Activated CD4-positive, alpha-beta T cell treated with anti-CD3 and anti-CD28 coated beads, Interleukin-2, amount 10 ng/mL, durations not matched to agents 24 days and 14 days (primary cell): ENCODE measurements at regions of chr13 and their contacts with region 1.

Region 1: DNA sequence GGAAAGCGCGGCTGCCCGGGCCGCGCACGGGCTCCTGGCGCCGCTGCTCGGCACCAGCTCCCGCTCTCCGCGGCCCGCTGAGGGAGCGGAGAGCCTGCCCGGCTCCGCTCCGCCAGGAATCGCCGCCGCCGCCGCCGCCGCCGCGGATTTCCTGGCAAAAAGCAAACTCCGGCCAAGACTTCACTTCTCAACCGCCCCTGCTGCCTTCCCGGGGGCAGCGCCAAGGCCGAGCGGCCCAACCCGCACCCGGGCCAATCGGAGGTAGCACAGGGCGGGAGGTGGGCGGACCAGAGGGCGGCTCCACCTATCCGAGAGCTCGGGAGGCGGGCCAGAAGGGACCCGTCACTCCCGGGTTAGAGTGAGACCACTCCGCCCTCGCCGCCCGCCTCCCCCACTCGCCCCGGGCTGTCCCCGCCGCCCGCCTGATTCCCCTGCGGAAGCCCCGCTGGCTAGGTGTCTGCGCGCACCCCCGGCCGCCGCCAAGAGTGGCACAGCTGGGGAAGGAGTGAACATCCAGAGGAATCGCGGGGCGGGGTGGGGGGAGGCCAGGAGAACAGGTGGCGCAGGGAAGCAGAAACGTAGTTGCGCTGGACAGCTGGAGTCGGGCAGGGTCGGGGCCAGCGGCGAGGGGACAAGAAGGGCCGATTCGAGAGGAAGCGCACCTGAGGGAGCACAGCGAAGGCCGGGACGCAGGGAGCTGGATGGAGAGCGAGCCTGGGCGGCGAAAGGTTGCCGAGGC is at the start of gene LNX2:
- DNase-seq: peak; percentile 99
- H3K4me3 Mint-ChIP-seq: peak within 1 kb of the TSS; percentile 98
- H3K27ac Mint-ChIP-seq: peak within 1 kb of the TSS; percentile 93
- H3K4me1 Mint-ChIP-seq: peaks cover 44% of the 10 kb centered on the region
- H3K27me3 Mint-ChIP-seq: no peaks in the 10 kb centered on the region
- total RNA-seq, gene LNX2: 4.1 and 4.3 TPM in 2 replicates

Region 2: GRCh38 chr13:27449936-27450828 is 170.4 kb before region 1 on chr13 and contains the start of gene MTIF3:
- intact Hi-C with region 1: loop called (anchors 1 kb)
- DNase-seq: peak; percentile 99
- H3K4me3 Mint-ChIP-seq: peak within 1 kb of the TSS; percentile 88
- H3K27ac Mint-ChIP-seq: peak within 1 kb of the TSS; percentile 96
- H3K4me1 Mint-ChIP-seq: peaks cover 43% of the 10 kb centered on the region
- H3K27me3 Mint-ChIP-seq: no peaks in the 10 kb centered on the region
- total RNA-seq, gene MTIF3: 28.8 and 30.4 TPM in 2 replicates

Region 3: DNA sequence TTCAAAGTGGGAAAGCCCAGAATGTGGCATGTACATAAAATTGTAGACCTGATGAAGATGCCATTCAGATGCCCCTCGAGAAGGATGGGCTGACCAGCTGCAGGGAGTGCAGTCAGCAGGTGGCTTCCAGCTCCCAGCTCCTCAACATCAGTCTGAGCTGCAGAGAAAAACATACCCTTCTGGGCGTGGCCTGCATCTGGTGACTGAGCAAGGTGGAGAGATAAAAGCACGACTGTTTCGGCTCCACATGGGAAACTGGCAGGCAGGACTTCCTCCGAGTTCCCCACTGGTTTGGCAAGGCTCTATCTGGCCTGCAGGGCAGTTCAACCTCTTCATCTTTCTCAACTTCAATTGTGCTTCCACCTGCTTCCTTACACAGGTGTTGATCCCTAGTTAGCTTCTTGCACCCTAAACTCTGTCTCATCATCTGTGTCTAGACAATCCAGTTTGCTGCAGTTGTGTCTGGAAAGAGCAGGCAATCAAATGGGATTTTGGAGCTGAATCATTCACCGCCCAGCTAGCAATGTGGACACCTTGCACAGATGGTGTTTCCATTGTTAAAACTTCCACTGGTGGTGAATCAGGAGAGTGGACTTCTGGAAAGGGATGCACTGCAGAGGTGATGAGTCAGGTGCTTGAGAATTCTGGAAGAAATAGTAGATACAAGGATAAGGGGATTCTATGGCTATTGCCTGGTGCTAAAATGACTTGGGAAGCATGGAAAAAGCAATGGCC is 57.9 kb after region 1 on chr13:
- intact Hi-C with region 1: no loop called
- DNase-seq: no peak
- H3K4me3 Mint-ChIP-seq: no peak overlapping the region
- H3K27ac Mint-ChIP-seq: no peak overlapping the region
- H3K4me1 Mint-ChIP-seq: no peaks in the 10 kb centered on the region
- H3K27me3 Mint-ChIP-seq: peaks cover 18% of the 10 kb centered on the region